Head of caudate nucleus (tissue), 42 donors: ENCODE measurements at regions of chr3 and their contacts with region 1.

Region 1: GRCh38 chr3:194134757-194135528 is 1.0 kb upstream of the HES1 start:
- DNase-seq: peak; percentile 42 to 91 (median 76)

Region 2: GRCh38 chr3:193780810-193781472 is 354.0 kb before region 1 on chr3:
- intact Hi-C with region 1: loop called (anchors 5 kb)
- DNase-seq: peak; percentile 49 to 86 (median 71)

Region 3: DNA sequence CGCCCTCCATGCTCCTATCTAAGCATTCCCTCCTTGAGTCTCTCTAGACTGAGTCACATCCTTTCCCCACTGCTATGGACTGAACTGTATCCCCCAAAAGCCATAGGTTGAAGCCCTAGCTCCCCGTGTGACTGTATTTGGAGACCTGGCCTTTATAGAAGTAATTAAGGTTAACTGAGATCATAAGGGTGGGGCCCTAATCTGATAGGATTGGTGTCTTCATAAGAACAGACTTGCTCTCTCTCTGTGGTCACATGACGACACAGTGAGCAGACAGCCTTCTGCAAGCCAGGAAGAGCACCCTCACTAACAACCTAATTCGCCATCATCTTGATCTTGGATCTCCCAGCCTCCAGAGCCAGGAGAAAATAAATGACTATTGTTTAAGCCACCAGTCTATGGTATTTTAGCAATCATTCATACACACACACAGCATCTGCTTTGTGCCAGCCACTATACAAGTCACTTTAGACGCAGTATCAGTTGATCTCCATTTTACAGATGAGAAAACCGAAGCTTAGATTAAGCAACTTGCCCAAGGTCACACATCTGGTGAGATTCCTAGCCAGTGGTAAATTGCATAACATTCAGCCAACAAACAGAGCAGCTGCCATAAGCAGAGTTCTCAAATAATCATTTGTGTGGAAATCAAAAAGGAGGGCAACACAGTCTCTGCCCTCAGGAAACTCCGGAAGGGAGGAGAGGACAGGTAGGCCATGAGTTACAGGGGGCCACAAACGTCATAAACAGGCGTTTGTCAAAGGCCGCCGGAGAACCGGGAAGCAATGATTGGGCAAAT is 65.3 kb before region 1 on chr3:
- intact Hi-C with region 1: loop called (anchors 5 kb)
- DNase-seq: no peak

Region 4: DNA sequence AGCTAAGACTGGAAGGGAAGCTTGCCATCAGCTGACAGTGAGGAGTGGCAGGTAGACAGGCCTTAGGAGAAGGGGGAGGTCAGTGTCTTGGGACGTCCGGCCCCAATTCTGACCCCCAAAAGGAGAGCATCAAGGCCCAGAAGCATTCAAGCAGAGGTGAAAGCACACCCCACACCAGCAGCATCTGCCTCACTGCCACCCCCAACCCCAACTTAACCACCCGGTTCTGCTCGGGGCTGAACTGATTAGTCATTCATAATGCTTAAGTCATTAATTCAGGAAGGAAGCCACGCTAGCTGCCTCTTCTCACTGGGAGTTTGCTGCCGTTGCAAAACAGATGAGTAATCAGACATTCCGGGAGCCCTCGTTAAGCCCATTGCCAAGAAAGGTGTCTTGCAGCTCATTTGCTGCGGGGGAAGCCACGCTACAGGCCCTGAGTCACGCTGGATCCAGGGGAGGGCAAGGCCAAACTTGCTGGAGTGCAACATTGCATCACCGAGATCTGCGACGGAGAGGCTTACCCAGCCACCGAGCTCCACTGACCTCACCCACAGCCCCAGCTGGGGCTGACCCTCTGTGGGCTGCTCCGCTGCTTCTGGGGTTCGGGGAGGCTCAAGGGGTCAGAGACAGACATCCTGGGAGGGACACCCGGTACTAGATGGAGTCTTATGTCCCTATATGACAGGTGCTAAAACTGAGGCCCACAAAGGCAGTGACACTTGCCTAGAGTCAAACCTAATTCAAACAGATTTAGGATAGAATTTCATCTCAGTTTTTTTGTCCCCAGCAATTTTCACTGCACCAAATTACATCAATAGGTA is 45.4 kb before region 1 on chr3:
- intact Hi-C with region 1: no loop called
- DNase-seq: peak; percentile 31 to 96 (median 76)

Region 5: GRCh38 chr3:194269610-194270145 is 134.7 kb after region 1 on chr3:
- intact Hi-C with region 1: loop called (anchors 5 kb)
- DNase-seq: peak in 31 of 42 donors; percentile 16 to 72 (median 46)

Region 6: GRCh38 chr3:194315088-194315964 is 180.4 kb after region 1 on chr3:
- intact Hi-C with region 1: loop called (anchors 10 kb)
- DNase-seq: peak; percentile 61 to 96 (median 88)